ENCODE measurements at regions of chr9 and their contacts with region 1.

Region 1: GRCh38 chr9:132669698-132670456 is at the start of gene DDX31:
- DNase-seq: peak; percentile 87
- ATAC-seq: peak; percentile 81
- H3K4me3 Mint-ChIP-seq: peak within 1 kb of the TSS; percentile 96
- H3K27ac Mint-ChIP-seq: peak within 1 kb of the TSS; percentile 95
- H3K4me1 Mint-ChIP-seq: peaks cover 52% of the 10 kb centered on the region
- H3K27me3 Mint-ChIP-seq: no peaks in the 10 kb centered on the region
- CTCF ChIP-seq: no peak
- total RNA-seq, gene DDX31: 18.0 and 21.8 TPM in 2 replicates

Region 2: DNA sequence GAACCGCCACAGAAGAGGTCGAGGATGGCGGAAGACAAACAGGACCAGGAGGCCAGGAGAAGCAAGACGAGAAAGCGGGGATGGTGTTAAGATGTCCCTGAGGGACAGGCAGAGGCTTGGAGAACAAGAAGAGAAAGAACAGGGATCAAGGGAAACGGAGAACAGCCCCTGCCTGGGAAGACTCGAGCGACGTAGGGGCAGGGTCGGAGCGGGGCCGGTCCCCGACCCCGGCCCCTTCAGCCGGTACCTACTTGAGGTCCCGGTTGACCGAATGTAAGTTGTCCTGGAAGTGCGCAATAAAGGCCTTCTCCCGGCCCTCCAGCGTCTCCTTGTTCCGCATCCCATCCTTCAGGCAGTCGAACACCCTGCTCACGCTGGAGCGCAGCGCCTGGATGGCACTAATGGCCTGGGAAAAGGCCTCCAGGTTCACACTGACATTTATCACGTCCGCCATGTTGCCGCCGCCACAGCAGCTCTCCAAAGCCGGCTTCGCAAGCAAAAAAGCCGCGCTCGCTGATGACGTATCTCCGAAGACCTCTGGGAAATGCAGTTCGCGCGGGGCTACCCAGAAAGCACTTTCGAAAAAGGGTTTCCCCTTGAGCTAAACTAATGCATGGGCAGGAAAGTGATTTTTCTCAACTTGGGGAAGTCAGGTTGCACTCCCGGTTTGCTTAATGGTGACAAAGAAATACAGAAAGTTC is 590.3 kb before region 1 on chr9 and contains the start of gene MED27:
- CTCF ChIA-PET with region 1: no interaction called
- POLR2A ChIA-PET with region 1: no interaction called
- intact Hi-C with region 1: loop called (anchors 1 kb)
- DNase-seq: peak; percentile 88
- ATAC-seq: peak; percentile 99
- H3K4me3 Mint-ChIP-seq: peak within 1 kb of the TSS; percentile 93
- H3K27ac Mint-ChIP-seq: peak within 1 kb of the TSS; percentile 81
- H3K4me1 Mint-ChIP-seq: peaks cover 30% of the 10 kb centered on the region
- H3K27me3 Mint-ChIP-seq: peaks cover 7% of the 10 kb centered on the region
- CTCF ChIP-seq: no peak
- total RNA-seq, gene MED27: 18.8 and 24.5 TPM in 2 replicates

Region 3: GRCh38 chr9:132333556-132333955 is 336.3 kb before region 1 on chr9:
- CTCF ChIA-PET with region 1: no interaction called
- POLR2A ChIA-PET with region 1: no interaction called
- intact Hi-C with region 1: no loop called
- DNase-seq: no peak
- ATAC-seq: no peak
- H3K4me3 Mint-ChIP-seq: no peak overlapping the region
- H3K27ac Mint-ChIP-seq: no peak overlapping the region
- H3K4me1 Mint-ChIP-seq: peaks cover 4% of the 10 kb centered on the region
- H3K27me3 Mint-ChIP-seq: no peaks in the 10 kb centered on the region
- CTCF ChIP-seq: no peak

Region 4: DNA sequence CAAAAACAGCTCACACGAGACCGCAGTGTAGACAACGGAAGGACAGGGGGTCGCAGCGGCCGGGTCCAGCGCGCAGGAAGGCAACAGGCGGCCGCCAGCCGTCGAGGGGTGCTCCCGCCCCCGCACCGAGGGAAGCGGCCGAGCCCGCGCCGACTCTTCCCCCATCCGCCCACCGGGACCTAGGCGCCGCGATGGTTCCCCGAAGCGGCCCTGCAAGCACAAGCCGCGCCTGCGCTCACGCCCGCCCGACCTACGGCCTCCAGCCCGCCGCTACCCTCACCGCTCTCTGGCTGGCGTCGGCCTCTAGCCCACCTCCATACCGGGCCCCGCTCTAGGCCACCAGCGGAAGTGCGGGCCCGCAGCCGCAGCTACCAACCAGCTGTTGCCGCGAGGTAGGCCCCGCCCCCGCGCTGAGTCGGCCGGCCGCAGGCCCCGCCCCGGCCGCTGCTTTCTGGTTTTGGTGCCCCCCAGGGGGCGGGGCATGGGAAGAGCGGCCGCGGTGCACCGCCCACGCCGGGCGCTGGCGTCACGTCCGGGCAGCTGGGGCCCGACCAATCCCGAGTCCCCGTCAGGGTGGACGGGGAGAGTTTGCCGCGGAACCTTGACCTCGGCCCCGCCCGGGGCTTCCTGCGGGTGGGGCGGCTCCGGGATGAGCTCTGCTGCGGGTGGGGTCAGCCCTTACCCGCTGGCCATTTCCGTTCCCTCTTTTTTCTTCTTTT is 315.1 kb before region 1 on chr9 and contains the start of gene SETX:
- CTCF ChIA-PET with region 1: no interaction called
- POLR2A ChIA-PET with region 1: interaction called, 5 read pairs
- intact Hi-C with region 1: loop called (anchors 1 kb)
- DNase-seq: peak; percentile 93
- ATAC-seq: peak; percentile 87
- H3K4me3 Mint-ChIP-seq: peak within 1 kb of the TSS; percentile 94
- H3K27ac Mint-ChIP-seq: peak within 1 kb of the TSS; percentile 97
- H3K4me1 Mint-ChIP-seq: peaks cover 53% of the 10 kb centered on the region
- H3K27me3 Mint-ChIP-seq: no peaks in the 10 kb centered on the region
- CTCF ChIP-seq: no peak
- total RNA-seq, gene SETX: 91.3 and 109 TPM in 2 replicates

Region 5: DNA sequence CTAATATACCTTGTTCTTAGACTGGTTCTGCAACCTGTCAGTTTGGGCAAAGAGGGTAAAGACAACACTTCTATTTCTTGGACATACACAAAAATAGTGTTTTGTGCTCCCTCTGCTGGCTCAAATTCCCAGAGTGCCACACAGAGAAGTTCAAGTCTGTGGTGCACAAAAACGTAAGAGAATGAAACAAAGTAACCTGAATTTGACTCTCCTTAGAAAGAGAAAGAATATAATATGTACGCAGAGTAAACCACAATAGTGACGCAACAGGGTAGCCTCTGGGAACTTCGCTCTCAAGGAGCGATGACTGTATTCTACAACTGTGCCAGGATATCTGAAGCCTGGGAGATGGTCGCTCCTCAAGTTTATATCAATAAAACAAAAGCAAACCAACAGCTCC is 18.6 kb before region 1 on chr9:
- CTCF ChIA-PET with region 1: no interaction called
- POLR2A ChIA-PET with region 1: no interaction called
- intact Hi-C with region 1: no loop called
- DNase-seq: no peak
- ATAC-seq: no peak
- H3K4me3 Mint-ChIP-seq: no peak overlapping the region
- H3K27ac Mint-ChIP-seq: no peak overlapping the region
- H3K4me1 Mint-ChIP-seq: no peaks in the 10 kb centered on the region
- H3K27me3 Mint-ChIP-seq: no peaks in the 10 kb centered on the region
- CTCF ChIP-seq: no peak

Region 6: GRCh38 chr9:132768932-132769905 is 99.3 kb after region 1 on chr9:
- CTCF ChIA-PET with region 1: interaction called, 3 read pairs
- POLR2A ChIA-PET with region 1: interaction called, 53 read pairs
- intact Hi-C with region 1: loop called (anchors 1 kb)
- DNase-seq: peak; percentile 50
- ATAC-seq: peak; percentile 76
- H3K4me3 Mint-ChIP-seq: peak overlapping the region; percentile 100
- H3K27ac Mint-ChIP-seq: peak overlapping the region; percentile 98
- H3K4me1 Mint-ChIP-seq: peaks cover 22% of the 10 kb centered on the region
- H3K27me3 Mint-ChIP-seq: no peaks in the 10 kb centered on the region
- CTCF ChIP-seq: no peak

Region 7: GRCh38 chr9:132877824-132878694 is 208.2 kb after region 1 on chr9 and contains the start of gene AK8:
- CTCF ChIA-PET with region 1: no interaction called
- POLR2A ChIA-PET with region 1: interaction called, 18 read pairs
- intact Hi-C with region 1: loop called (anchors 1 kb)
- DNase-seq: peak; percentile 87
- ATAC-seq: peak; percentile 85
- H3K4me3 Mint-ChIP-seq: peak within 1 kb of the TSS; percentile 82
- H3K27ac Mint-ChIP-seq: peak within 1 kb of the TSS; percentile 70
- H3K4me1 Mint-ChIP-seq: peaks cover 17% of the 10 kb centered on the region
- H3K27me3 Mint-ChIP-seq: no peaks in the 10 kb centered on the region
- CTCF ChIP-seq: no peak
- total RNA-seq, gene AK8: 0.93 and 1.0 TPM in 2 replicates

Region 8: DNA sequence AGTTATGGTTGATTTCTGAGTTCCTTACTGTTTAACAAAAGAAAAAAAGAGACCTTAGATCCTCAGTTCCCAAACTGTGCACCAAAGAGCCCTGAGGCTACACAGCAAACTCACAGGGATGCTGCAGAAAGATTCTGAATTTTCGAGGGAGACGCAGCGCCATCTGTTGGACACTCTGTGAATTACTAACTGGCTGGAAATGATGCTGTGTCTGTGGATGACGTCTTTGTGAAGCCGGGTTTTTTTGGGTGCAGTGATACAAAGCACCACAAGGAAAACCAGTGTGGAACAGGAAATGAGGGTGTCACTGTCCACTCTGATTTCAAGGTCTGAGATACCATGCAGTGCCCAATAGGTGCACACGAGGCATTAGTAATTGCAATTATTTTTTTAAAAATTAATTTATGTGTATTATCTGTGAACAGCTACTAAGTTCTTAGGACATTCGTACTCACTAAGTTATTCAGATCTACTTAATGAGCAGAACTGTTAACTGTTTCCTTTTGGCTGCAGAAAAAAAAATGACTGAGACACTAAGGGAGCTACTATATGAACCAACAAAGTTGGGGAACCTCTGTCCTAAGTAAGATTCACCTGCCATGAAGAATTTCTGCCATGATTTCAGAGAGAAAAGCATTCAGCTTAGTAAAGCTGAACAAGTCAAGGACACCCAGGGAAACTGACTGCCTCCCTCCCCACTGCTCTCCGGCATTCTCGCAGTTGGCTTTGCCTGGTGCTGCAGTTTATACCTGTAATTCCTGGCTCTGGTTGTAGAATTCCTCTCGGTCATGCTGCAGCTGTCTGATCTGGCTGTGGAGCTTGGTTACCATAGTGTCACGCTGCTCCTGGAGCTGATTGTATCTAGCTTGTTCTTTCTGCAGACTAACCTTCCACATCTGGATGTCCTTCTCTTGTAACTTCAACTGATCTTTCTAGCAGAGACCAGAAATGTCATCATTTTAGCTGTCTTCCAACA is 232.3 kb after region 1 on chr9:
- CTCF ChIA-PET with region 1: interaction called, 5 read pairs
- POLR2A ChIA-PET with region 1: interaction called, 5 read pairs
- intact Hi-C with region 1: loop called (anchors 1 kb)
- DNase-seq: peak; percentile 57
- ATAC-seq: peak; percentile 98
- H3K4me3 Mint-ChIP-seq: no peak overlapping the region
- H3K27ac Mint-ChIP-seq: no peak overlapping the region
- H3K4me1 Mint-ChIP-seq: peaks cover 5% of the 10 kb centered on the region
- H3K27me3 Mint-ChIP-seq: no peaks in the 10 kb centered on the region
- CTCF ChIP-seq: peak; percentile 54

Region 9: GRCh38 chr9:132944302-132945185 is 274.7 kb after region 1 on chr9 and contains the start of gene TSC1:
- CTCF ChIA-PET with region 1: no interaction called
- POLR2A ChIA-PET with region 1: interaction called, 19 read pairs
- intact Hi-C with region 1: no loop called
- DNase-seq: peak; percentile 96
- ATAC-seq: peak; percentile 90
- H3K4me3 Mint-ChIP-seq: peak within 1 kb of the TSS; percentile 98
- H3K27ac Mint-ChIP-seq: peak within 1 kb of the TSS; percentile 100
- H3K4me1 Mint-ChIP-seq: peaks cover 29% of the 10 kb centered on the region
- H3K27me3 Mint-ChIP-seq: no peaks in the 10 kb centered on the region
- CTCF ChIP-seq: no peak
- total RNA-seq, gene TSC1: 51.7 and 61.4 TPM in 2 replicates

Measured in activated B cell treated with CpG ODN at 0.5 μM for 24 hours (primary cell).